Right cardiac atrium (tissue), 5 donors: ENCODE measurements at regions of chr7 and their contacts with region 1.

Region 1: GRCh38 chr7:117873310-117874190 is at the start of gene CTTNBP2:
- DNase-seq: peak; percentile 69 to 87 (median 86)
- ATAC-seq: peak; percentile 87 to 90
- H3K4me3 ChIP-seq: peak within 1 kb of the TSS; percentile 76
- H3K27ac ChIP-seq: no peak within 1 kb of the TSS
- H3K4me1 ChIP-seq: no peaks in the 10 kb centered on the region
- H3K27me3 ChIP-seq: no peaks in the 10 kb centered on the region
- total RNA-seq, gene CTTNBP2: 4.1 to 5.5 (median 4.4) TPM

Region 2: GRCh38 chr7:117741962-117742361 is 131.6 kb before region 1 on chr7:
- intact Hi-C with region 1: loop called in 2 of 4 experiments (anchors 10 kb)
- DNase-seq: no peak
- ATAC-seq: no peak
- H3K4me3 ChIP-seq: no peak overlapping the region
- H3K27ac ChIP-seq: no peak overlapping the region
- H3K4me1 ChIP-seq: no peaks in the 10 kb centered on the region
- H3K27me3 ChIP-seq: no peaks in the 10 kb centered on the region

Region 3: GRCh38 chr7:117827862-117828261 is 45.7 kb before region 1 on chr7:
- intact Hi-C with region 1: loop called in 1 of 4 experiments (anchors 5 kb)
- DNase-seq: no peak
- ATAC-seq: no peak
- H3K4me3 ChIP-seq: no peak overlapping the region
- H3K27ac ChIP-seq: no peak overlapping the region
- H3K4me1 ChIP-seq: peaks cover 4% of the 10 kb centered on the region
- H3K27me3 ChIP-seq: no peaks in the 10 kb centered on the region

Region 4: DNA sequence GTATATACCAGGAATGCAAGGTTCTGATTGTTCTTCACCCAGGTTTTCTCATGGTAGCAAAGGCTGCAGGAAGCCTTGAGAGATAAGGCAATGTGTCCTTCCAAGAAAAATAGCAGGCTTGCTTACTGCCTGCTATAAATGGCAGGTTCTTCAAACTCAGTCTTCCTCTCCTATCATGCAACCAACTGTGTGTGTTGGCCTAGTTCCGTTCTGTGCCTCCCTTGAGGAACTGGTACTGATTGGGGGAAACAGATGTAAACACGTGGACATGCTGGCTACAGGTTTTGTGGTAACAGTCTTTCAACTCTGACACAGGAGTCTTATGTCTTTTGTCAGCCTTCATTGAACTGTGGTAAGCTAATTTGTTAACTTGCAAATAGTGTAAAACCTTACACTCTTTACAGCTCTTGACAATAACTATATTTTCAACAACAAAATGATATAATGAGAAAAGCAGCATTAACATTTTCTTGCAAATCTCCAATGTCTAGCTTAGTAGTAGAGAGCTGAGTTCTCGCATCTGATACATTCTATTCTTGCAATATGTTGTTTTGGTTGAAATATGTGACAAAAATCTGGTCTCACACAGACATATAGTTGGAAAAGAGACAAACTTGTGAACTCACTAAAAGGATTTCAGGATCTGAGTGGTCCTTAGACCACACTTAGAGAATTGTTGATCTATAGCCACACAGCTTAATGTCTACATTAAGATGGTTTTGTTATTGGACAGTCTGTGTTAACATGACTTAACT is 255.7 kb after region 1 on chr7:
- intact Hi-C with region 1: no loop called
- DNase-seq: no peak
- ATAC-seq: peak in 1 of 2 donors; percentile 56
- H3K4me3 ChIP-seq: no peak overlapping the region
- H3K27ac ChIP-seq: no peak overlapping the region
- H3K4me1 ChIP-seq: no peaks in the 10 kb centered on the region
- H3K27me3 ChIP-seq: no peaks in the 10 kb centered on the region